ENCODE measurements at regions of chr11 and their contacts with region 1.

Region 1: DNA sequence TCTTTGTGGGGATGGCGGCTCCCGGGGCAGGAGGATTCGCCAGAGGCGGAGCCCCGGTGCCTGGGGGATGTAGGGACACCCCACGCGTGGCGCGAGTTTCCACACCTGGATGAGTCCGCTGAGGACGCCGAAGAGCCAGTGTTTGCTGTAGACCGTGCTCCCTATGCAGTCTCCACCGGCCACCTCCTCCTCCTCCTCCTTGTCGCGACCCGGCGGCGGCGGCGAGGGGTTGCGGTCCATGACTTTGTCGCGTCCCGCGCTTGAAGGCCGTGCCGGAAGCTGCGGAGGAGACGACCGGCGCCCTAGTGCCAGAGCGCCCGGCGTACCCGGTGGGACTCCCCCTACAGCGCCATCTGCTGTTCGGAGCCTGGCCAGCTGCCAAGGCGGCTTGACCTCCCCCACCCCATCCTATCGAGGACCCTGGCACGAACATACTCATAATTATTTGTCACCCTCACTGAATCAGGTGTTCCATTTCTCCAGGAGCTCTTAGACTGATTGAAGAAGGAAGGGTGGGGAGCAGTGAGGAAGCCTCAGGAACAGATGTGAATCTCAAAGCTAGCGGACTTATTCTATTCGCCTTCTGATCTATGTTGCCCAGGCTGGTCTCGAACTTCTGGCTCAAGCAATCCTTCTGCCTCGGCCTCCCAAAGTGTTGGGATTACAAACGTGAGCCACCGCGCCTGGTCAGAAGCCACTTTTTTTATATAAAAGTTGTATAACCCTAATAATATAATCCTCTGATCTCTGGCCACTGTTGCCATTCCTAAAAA is at the start of gene SAAL1:
- DNase-seq: peak; percentile 67 to 75
- ATAC-seq: peak; percentile 93 to 95
- H3K4me3 ChIP-seq: peak within 1 kb of the TSS; percentile 85 to 96 (median 90)
- H3K27ac ChIP-seq: peak within 1 kb of the TSS; percentile 60 to 76 (median 68)
- H3K4me1 ChIP-seq: peaks cover 6 to 12% of the 10 kb centered on the region in 2 donors
- H3K27me3 ChIP-seq: no peaks in the 10 kb centered on the region
- CTCF ChIP-seq: peak; percentile 26 to 68 (median 49)
- POLR2A ChIP-seq: peak in 1 of 2 donors; percentile 39
- total RNA-seq, gene SAAL1: 3.0 to 16.1 (median 4.4) TPM

Region 2: DNA sequence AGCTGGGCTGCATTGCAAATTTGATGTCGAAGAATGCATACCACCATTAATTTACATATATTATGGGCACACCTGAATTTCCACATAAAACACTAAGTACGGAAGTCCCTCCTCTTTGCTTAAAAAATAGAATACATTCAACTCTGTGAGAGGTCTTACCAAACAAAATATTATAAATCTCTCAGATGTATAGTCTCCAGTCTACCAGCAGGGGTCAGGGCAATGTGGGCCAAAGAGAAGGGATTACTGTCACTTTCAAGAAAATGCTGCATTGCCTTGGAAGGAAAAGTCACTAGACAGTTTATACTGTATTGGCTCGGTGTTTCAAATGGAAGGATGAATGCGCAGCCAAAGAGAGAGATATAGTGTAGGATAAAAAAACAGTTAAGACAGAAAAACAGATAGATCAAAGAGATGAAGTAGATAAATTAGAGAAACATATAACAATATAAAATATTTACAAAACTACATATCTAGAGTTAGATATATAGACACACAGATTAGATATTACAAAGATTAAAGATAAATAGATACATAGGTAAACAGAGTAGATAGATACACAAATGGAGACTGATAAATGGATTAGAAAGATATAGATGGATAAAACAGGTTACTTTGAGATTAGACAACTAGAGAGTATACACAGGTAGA is 114.1 kb before region 1 on chr11:
- in situ Hi-C with region 1: loop called in 1 of 4 experiments (anchors 10 kb)
- intact Hi-C with region 1: loop called (anchors 5 kb)
- DNase-seq: no peak
- ATAC-seq: peak in 1 of 2 donors; percentile 74
- H3K4me3 ChIP-seq: no peak overlapping the region
- H3K27ac ChIP-seq: no peak overlapping the region
- H3K4me1 ChIP-seq: peaks cover 0 to 11% of the 10 kb centered on the region in 2 donors
- H3K27me3 ChIP-seq: no peaks in the 10 kb centered on the region
- CTCF ChIP-seq: peak; percentile 47 to 69 (median 58)
- POLR2A ChIP-seq: no peak

Region 3: DNA sequence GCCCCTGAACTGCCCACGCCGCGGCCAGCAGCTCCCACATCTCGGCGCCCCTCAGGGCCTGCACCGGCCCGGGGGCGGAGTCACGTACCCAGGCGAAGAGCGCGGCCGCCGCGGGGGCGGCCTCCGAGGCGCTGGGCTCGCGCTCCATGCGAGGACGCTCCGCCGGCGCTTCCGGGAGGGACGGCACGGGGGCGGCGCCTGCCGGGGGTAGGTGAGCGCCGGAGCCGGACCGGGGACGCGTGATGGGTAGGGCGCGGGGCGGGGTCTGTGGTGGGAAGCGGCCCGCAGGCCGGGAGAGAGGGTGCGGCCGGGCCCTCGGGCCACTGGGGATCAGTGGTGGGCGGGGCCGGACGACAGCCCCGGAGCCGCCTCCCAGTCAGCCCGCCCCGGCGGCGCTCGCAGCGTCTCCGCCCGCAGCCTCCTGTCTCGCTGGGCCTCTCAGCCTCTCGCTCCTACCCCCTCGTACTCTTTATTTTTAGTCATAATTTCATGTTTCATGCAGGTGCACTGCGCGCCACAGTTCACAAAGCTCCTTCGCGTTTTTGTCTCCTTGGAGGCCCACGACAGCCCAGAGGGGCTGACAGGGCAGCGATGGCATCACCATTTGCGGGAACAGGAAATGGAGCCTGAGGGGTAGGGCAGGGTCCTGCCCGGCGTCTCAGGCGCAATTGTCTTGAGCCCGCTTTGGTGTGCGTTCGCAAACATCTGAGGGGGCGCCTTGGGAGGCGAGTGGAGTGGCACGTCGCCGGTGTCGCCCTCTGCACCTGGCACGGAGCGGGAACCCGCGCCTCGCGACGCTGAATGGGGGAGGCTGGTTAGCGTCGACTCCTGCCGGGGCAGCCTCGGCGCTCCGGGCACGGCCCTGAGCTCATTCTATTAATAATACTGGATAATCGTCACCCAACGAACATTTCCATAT is 92.9 kb before region 1 on chr11 and contains the start of gene SERGEF:
- in situ Hi-C with region 1: no loop called
- intact Hi-C with region 1: loop called (anchors 5 kb)
- DNase-seq: peak; percentile 90 to 92
- ATAC-seq: peak; percentile 84 to 86
- H3K4me3 ChIP-seq: peak within 1 kb of the TSS; percentile 78 to 100 (median 91)
- H3K27ac ChIP-seq: peak within 1 kb of the TSS; percentile 78 to 91 (median 86)
- H3K4me1 ChIP-seq: peaks cover 9 to 14% of the 10 kb centered on the region in 2 donors
- H3K27me3 ChIP-seq: no peaks in the 10 kb centered on the region
- CTCF ChIP-seq: peak in 2 of 5 experiments; percentile 24 to 63
- POLR2A ChIP-seq: peak; percentile 60 to 67
- total RNA-seq, gene SERGEF: 11.8 to 34.7 (median 24.5) TPM

Region 4: DNA sequence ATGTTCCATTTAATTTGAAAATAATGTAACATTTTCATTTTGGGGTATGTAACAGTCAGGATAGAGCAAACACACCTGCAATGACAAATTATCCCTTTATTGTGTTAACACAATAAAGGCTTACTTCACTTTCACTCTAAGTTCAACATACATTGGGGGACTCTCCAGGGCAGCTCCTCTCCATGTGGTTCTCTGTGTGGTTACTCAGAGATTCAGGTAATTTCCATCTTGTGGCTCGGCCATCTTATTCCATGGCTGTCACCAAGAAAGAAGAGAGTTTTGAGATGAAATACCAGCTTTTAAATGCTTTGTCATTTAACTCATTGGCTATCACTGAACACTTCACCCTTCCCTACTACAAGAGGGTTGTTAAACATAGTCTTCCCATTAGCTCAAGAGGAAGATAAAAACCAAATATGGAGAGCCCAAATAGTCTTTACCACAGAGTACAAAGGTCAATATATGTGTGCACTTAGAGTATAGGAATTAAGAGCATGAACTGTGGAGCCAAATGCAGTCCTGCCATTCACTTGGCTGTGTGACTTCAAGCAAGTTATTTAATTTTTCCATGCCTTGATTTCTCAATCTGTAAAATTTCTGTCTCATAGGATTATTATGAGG is 49.3 kb before region 1 on chr11:
- in situ Hi-C with region 1: no loop called
- intact Hi-C with region 1: no loop called
- DNase-seq: no peak
- ATAC-seq: no peak
- H3K4me3 ChIP-seq: no peak overlapping the region
- H3K27ac ChIP-seq: no peak overlapping the region
- H3K4me1 ChIP-seq: peaks cover 0 to 6% of the 10 kb centered on the region in 2 donors
- H3K27me3 ChIP-seq: no peaks in the 10 kb centered on the region
- CTCF ChIP-seq: no peak
- POLR2A ChIP-seq: no peak

Region 5: DNA sequence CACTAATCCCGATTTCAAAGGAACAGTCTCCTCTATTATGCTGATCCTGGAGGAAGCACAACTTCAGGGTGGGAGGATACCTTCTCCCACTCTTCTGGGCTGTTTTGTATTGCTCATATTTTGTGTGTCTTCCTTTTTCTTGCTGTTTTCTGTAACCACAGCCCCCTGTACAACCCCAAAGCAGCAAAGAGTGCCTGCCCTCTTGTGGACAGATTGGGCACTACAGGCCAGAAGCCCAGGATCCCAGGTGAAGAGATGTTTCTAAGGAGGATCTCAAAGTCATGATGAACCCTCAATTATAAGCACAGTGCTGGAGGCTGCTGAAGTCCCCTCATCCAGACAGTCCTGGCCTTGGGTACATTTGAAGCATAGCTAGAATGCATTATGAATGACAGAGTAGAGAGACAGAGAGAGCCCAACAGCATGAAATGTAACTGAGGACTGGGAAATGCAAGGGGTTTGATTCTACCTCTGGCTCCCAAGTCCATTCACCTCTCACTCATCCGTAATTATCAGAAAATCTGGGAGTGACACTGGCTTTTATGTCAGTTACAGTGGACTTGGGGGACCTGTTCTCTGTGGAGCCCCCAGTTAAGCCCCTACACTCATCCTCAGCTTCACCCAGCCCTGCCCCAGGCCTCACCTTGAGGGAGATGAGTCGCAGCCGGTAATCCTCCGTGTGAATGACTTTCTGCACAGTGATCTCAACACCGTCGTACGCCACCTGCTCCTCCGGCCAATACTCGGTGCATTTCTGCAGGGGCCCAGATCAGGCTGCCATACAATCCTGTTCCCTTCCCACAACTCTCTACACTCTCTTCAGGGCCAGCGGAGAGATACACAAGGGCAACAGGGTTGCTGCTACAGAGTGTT is 626.2 kb after region 1 on chr11:
- in situ Hi-C with region 1: loop called in 2 of 4 experiments (anchors 25 kb)
- intact Hi-C with region 1: no loop called
- DNase-seq: peak in 1 of 2 donors; percentile 24
- ATAC-seq: peak in 1 of 2 donors; percentile 71
- H3K4me3 ChIP-seq: no peak overlapping the region
- H3K27ac ChIP-seq: no peak overlapping the region
- H3K4me1 ChIP-seq: no peaks in the 10 kb centered on the region
- H3K27me3 ChIP-seq: no peaks in the 10 kb centered on the region
- CTCF ChIP-seq: peak; percentile 65 to 93 (median 81)
- POLR2A ChIP-seq: no peak